ENCODE measurements at regions of chr10 and their contacts with region 1.

Region 1: GRCh38 chr10:23533212-23533611 is 94.3 kb downstream of the OTUD1 start:
- DNase-seq: no peak
- H3K4me3 ChIP-seq: no peak overlapping the region
- H3K27ac ChIP-seq: no peak overlapping the region
- H3K4me1 ChIP-seq: no peaks in the 10 kb centered on the region
- H3K27me3 ChIP-seq: no peaks in the 10 kb centered on the region
- CTCF ChIP-seq: no peak
- POLR2A ChIP-seq: no peak

Region 2: GRCh38 chr10:23461557-23461956 is 71.7 kb before region 1 on chr10:
- intact Hi-C with region 1: loop called (anchors 2 kb)
- DNase-seq: no peak
- H3K4me3 ChIP-seq: no peak overlapping the region
- H3K27ac ChIP-seq: no peak overlapping the region
- H3K4me1 ChIP-seq: no peaks in the 10 kb centered on the region
- H3K27me3 ChIP-seq: no peaks in the 10 kb centered on the region
- CTCF ChIP-seq: no peak
- POLR2A ChIP-seq: no peak

Region 3: GRCh38 chr10:23493711-23494110 is 39.5 kb before region 1 on chr10:
- intact Hi-C with region 1: no loop called
- DNase-seq: no peak
- H3K4me3 ChIP-seq: no peak overlapping the region
- H3K27ac ChIP-seq: no peak overlapping the region
- H3K4me1 ChIP-seq: no peaks in the 10 kb centered on the region
- H3K27me3 ChIP-seq: no peaks in the 10 kb centered on the region
- CTCF ChIP-seq: no peak
- POLR2A ChIP-seq: no peak